GM10248 (cell line): ENCODE measurements at regions of chr11 and their contacts with region 1.

Region 1: GRCh38 chr11:134050541-134051383 is 18.1 kb upstream of the JAM3 start:
- DNase-seq: peak; percentile 86
- CTCF ChIP-seq: peak; percentile 88

Region 2: GRCh38 chr11:133966921-133967598 is 83.7 kb before region 1 on chr11:
- CTCF ChIA-PET with region 1: no interaction called
- POLR2A ChIA-PET with region 1: no interaction called
- DNase-seq: peak; percentile 43
- CTCF ChIP-seq: peak; percentile 15

Region 3: GRCh38 chr11:133995066-133995465 is 55.7 kb before region 1 on chr11:
- CTCF ChIA-PET with region 1: no interaction called
- POLR2A ChIA-PET with region 1: no interaction called
- DNase-seq: no peak
- CTCF ChIP-seq: no peak

Region 4: GRCh38 chr11:134024420-134025081 is 26.2 kb before region 1 on chr11:
- CTCF ChIA-PET with region 1: interaction called, 14 read pairs
- POLR2A ChIA-PET with region 1: no interaction called
- DNase-seq: no peak
- CTCF ChIP-seq: no peak

Region 5: DNA sequence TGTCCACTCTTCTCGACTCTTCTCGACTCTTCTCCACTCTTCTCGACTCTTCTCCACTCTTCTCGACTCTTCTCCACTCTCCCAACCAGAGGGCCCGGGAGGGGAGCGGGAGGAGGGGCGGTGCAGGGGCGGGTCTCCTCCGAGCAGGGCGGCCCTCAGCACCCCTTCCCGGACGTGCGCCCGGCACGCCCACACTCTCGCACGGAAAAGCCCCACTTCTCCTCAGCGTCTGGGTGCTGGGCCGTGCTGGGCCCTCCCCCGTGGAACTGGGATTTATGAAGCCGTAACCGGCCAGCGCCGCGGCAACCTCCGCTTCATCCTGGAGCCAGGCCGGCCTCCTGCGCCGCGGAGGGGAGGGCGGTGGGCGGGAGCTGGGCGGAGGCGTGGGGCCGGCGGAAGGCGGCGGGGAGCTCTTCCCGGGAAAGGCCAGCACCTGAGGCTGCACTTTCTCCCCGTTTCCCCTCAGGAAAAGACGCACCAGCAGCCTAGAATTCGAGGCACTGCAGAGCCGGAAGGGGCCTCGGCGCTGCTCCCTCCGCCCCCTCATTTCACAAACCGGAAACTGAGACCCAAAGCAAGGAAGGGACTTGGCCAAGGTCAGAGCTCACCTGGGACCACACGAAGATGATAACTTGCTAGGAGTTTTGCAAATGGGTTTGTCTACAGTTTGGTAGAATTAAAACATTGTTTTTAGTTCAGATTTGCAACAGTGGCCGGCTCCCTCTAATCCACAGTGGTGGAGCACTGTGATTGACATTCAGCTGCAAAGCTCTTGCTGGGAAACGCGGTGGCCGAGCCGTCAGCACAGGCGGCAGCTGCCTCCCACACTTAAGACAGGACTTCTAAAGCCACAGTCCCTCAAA is 13.5 kb before region 1 on chr11:
- CTCF ChIA-PET with region 1: interaction called, 26 read pairs
- POLR2A ChIA-PET with region 1: no interaction called
- DNase-seq: peak; percentile 58
- CTCF ChIP-seq: no peak

Region 6: DNA sequence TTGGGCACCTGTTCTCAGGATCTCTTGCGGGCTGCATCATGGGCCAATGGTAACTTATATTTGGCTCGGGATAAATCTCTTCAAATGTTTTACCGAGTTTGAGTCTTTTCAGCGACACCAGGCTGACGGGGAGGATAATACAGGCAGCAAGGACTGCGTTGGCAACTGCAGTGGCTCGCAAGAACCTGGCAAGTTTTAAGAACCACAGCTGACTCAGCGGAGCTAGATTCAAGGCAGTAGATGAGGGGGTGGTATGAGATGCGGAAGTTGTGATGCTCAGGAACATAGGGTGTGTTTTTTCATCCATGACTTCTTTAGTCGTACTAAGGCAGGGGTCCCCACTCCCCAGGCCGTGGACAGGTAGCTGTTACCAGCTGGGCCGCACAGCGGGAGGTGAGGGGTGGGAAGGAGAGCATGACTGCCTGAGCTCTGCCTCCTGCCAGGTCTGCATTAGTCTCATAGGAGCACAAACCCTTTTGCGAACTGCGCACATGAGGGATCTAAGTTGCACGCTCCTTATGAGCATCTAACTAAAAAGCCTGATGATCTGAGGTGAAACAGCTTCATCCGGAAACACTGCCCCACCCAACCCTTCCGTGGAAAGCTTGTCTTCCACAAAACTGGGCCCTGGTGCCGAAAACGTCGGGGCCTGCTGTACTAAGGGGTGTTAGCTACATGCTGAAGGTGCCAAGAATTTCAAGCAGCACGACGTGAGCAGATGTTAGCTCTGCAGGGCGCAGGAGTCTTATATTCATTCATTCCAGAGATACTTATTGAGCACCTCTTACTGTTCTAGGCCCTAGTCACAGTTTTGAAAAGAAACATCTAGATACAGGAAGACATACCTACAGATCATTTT is 11.7 kb after region 1 on chr11:
- CTCF ChIA-PET with region 1: interaction called, 22 read pairs
- POLR2A ChIA-PET with region 1: no interaction called
- DNase-seq: no peak
- CTCF ChIP-seq: no peak

Region 7: DNA sequence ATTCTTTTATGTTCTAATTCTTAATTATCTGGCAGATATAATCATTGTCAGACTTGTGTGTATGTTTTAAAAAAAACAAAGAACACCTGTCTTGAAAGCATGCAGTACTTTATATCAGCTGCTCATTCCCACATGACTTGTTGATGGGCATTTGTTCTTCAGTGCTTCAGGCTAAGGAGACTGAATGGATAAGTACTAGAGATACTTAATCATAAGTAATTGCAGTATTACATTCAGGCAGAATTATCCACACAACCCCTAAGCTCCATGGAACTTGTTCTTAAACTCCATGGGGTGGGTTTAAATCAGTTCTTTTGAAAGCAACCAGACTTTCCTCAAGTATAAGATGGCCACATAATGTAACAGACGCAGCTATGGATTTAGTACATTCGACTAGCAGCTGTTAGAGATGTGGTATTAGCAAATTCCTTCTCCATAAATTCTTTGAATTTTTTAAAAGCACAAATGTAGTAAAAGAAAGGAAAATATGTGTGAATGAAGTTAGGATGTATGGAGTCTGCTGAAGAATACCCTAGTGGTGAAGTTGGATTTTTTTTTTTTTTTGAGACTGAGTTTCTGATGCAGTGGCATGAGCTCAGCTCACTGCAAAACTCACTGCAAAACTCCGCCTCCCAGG is 21.1 kb after region 1 on chr11:
- CTCF ChIA-PET with region 1: interaction called, 10 read pairs
- POLR2A ChIA-PET with region 1: no interaction called
- DNase-seq: no peak
- CTCF ChIP-seq: no peak

Region 8: DNA sequence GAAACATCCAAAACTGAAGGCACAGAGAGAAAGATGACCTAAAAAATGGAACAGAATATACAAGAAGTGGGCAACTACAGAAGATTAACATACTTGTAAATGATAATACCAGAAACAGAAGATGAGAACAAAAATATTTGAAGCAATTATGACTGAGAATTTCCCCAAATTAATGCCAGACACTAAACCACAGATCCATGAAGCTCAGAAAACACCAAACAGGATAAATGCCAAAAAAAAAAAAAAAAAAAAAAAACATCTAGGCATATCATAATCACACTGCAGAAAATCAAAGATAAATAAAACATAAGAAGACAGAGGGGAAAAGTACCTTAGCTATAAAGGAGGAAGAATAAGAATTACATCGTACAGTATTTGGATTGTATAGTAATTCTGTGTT is 83.4 kb after region 1 on chr11:
- CTCF ChIA-PET with region 1: interaction called, 12 read pairs
- POLR2A ChIA-PET with region 1: no interaction called
- DNase-seq: no peak
- CTCF ChIP-seq: no peak